Left lung (tissue), 14 donors: ENCODE measurements at regions of chr3 and their contacts with region 1.

Region 1: GRCh38 chr3:186821429-186822367 is 15.4 kb upstream of the RFC4 start:
- DNase-seq: peak in 1 of 4 donors; percentile 44
- ATAC-seq: peak; percentile 63
- H3K4me3 ChIP-seq: no peak overlapping the region
- H3K27ac ChIP-seq: no peak overlapping the region
- H3K4me1 ChIP-seq: peaks cover 0 to 13% of the 10 kb centered on the region in 2 donors
- H3K27me3 ChIP-seq: peaks cover 26 to 43% of the 10 kb centered on the region in 2 donors
- CTCF ChIP-seq: peak; percentile 40 to 52

Region 2: GRCh38 chr3:186617038-186617946 is 204.4 kb before region 1 on chr3:
- intact Hi-C with region 1: loop called in 1 of 2 experiments (anchors 5 kb)
- DNase-seq: peak; percentile 36 to 97 (median 86)
- ATAC-seq: peak; percentile 99
- H3K4me3 ChIP-seq: no peak overlapping the region
- H3K27ac ChIP-seq: no peak overlapping the region
- H3K4me1 ChIP-seq: peaks cover 0 to 8% of the 10 kb centered on the region in 2 donors
- H3K27me3 ChIP-seq: peaks cover 0 to 78% of the 10 kb centered on the region in 2 donors
- CTCF ChIP-seq: peak; percentile 83 to 89

Region 3: GRCh38 chr3:186959029-186959624 is 137.4 kb after region 1 on chr3:
- intact Hi-C with region 1: no loop called
- DNase-seq: no peak
- ATAC-seq: no peak
- H3K4me3 ChIP-seq: no peak overlapping the region
- H3K27ac ChIP-seq: no peak overlapping the region
- H3K4me1 ChIP-seq: peaks cover 4 to 11% of the 10 kb centered on the region in 2 donors
- H3K27me3 ChIP-seq: no peaks in the 10 kb centered on the region
- CTCF ChIP-seq: no peak